BJ (cell line): ENCODE measurements at regions of chr14 and their contacts with region 1.

Region 1: GRCh38 chr14:21498553-21499526 is 12.3 kb downstream of the METTL3 start:
- DNase-seq: no peak
- H3K4me3 ChIP-seq: no peak overlapping the region
- H3K27me3 ChIP-seq: no peaks in the 10 kb centered on the region
- CTCF ChIP-seq: peak; percentile 50

Region 2: GRCh38 chr14:21440859-21441258 is 58.0 kb before region 1 on chr14:
- CTCF ChIA-PET with region 1: no interaction called
- POLR2A ChIA-PET with region 1: no interaction called
- DNase-seq: no peak
- H3K4me3 ChIP-seq: no peak overlapping the region
- H3K27me3 ChIP-seq: no peaks in the 10 kb centered on the region
- CTCF ChIP-seq: no peak

Region 3: DNA sequence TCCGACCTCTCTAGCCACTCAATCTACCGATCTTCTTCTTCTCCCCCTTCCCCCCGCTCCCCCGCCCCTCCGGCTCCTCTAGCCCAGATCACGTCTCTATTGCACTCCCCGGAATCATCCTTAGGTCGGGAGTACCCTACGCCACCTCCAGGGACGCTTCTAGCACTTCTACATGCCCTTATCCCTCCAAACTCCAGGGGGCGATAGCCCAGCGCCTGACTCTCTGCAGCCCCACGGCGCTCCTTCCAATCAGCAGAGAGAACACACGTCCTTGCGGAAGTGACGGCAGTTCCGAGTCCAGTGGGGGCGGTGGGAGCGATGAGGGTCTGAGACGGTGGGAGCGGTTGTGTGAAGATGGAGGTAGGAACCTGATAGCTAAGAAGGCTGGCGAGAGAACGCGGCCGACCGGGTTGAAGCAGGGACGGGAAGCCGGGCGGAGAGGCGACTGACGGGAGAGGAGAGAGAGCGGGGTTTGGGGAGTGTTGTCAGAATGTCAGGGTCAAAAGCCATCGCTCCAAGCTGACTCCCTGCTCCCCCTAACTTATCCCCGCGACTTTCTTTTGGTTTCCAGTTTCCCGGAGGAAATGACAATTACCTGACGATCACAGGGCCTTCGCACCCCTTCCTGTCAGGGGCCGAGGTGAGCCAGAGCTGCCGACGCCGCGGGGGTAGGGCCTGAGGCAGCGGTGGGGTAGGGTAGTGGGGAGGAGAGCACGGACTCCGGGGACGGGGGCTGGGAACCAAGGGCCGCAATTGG is 21.7 kb before region 1 on chr14 and contains the starts of genes RAB2B and TOX4:
- CTCF ChIA-PET with region 1: interaction called, 13 read pairs
- POLR2A ChIA-PET with region 1: no interaction called
- DNase-seq: peak; percentile 95
- H3K4me3 ChIP-seq: peak within 1 kb of the TSS; percentile 94
- H3K27me3 ChIP-seq: no peaks in the 10 kb centered on the region
- CTCF ChIP-seq: peak; percentile 100
- polyA plus RNA-seq, gene RAB2B: 20.3 and 29.9 TPM in 2 replicates
- polyA plus RNA-seq, gene TOX4: 105 and 141 TPM in 2 replicates

Region 4: GRCh38 chr14:21486640-21487087 is 12.2 kb before region 1 on chr14:
- CTCF ChIA-PET with region 1: interaction called, 22 read pairs
- POLR2A ChIA-PET with region 1: interaction called, 3 read pairs
- DNase-seq: peak; percentile 93
- H3K4me3 ChIP-seq: no peak overlapping the region
- H3K27me3 ChIP-seq: no peaks in the 10 kb centered on the region
- CTCF ChIP-seq: no peak

Region 5: DNA sequence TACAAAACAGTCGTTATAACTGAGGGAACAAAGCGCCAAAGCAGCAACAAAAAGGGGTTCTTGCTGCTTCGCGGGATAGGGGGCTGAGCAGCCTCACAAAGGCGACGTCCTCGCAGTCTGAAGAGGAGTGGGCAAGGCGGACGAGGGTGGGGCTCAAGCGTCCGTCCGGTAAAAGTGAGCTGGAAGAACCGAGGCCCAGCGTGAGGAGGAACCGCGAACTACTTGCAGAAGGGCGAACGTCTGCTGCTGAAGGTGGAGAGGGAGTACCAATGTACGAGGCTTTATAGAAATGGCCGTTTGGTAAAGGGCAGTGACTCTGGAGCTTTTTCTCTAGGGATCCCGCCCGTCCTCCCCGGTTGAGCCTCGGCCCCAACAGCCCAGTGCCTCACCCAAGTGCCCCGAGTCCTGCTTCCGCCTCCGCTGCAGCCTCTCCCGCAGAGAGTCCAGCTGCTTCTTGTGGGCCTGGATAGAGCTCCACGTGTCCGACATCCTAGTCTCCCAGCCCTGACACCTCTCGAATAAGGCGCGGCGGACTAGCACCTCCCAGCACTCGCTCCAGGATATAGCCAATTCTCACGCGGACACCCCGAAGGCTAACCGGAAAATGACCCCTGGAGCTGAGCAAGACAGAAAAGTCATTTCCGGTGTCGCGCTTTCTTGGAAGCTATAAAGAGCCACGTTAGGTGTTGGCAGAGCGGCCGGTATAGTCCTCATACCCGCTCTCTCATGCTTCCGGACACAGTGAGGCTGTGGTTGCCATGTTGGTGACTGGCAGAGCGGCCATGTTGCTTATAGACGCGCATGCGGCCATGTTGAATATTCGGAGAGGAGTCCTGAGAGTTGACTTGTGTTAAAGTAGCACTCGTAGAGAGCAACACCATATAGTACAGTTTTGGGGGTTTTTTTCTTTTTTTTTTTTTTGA is 12.2 kb after region 1 on chr14 and contains the start of gene METTL3:
- CTCF ChIA-PET with region 1: interaction called, 19 read pairs
- POLR2A ChIA-PET with region 1: no interaction called
- DNase-seq: peak; percentile 95
- H3K4me3 ChIP-seq: peak within 1 kb of the TSS; percentile 87
- H3K27me3 ChIP-seq: 0 out of 2 replicates have a peak, but pooled peaks cover 1% of the 10 kb centered on the region
- CTCF ChIP-seq: no peak
- polyA plus RNA-seq, gene METTL3: 52.3 and 63.3 TPM in 2 replicates

Region 6: GRCh38 chr14:21557084-21557901 is 58.5 kb after region 1 on chr14:
- CTCF ChIA-PET with region 1: interaction called, 19 read pairs
- POLR2A ChIA-PET with region 1: no interaction called
- DNase-seq: peak; percentile 91
- H3K4me3 ChIP-seq: no peak overlapping the region
- H3K27me3 ChIP-seq: no peaks in the 10 kb centered on the region
- CTCF ChIP-seq: peak; percentile 59